ENCODE measurements at regions of chr5 and their contacts with region 1.

Region 1: DNA sequence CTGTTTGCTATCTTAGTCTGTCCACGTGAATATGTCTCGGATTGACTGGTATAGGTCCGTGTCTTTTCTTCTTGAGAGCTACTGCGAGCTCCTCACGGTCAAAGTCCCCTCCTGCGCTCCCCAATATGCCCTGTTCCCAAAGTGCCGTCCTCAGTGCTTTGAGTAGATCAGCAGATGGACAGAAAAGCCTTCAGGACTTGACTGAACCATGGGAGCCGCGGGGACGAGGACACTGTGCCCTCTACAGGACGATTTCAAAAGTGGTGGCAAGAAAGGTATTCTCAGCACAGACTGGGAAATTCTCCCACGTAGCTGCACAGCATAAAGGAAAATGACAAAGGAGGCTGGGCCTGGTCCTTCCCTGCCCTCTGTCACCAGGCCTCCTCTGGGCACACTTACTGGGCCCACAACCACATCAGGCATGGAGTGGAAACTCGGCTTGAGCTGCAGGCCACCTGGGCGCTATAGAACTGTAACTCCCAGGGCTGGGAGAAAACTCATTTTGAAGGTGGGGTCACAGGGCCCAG is 16.6 kb upstream of the MTMR12 start:
- DNase-seq: peak in 4 of 5 donors; percentile 37 to 50 (median 48)
- H3K4me3 ChIP-seq: no peak overlapping the region
- H3K27ac ChIP-seq: no peak overlapping the region
- H3K4me1 ChIP-seq: peaks cover 3 to 13% (median 4%) of the 10 kb centered on the region in 3 donors
- H3K27me3 ChIP-seq: no peaks in the 10 kb centered on the region
- CTCF ChIP-seq: peak; percentile 69

Region 2: GRCh38 chr5:32109236-32109635 is 220.1 kb before region 1 on chr5:
- intact Hi-C with region 1: no loop called
- DNase-seq: no peak
- H3K4me3 ChIP-seq: no peak overlapping the region
- H3K27ac ChIP-seq: no peak overlapping the region
- H3K4me1 ChIP-seq: no peaks in the 10 kb centered on the region
- H3K27me3 ChIP-seq: no peaks in the 10 kb centered on the region
- CTCF ChIP-seq: no peak

Region 3: DNA sequence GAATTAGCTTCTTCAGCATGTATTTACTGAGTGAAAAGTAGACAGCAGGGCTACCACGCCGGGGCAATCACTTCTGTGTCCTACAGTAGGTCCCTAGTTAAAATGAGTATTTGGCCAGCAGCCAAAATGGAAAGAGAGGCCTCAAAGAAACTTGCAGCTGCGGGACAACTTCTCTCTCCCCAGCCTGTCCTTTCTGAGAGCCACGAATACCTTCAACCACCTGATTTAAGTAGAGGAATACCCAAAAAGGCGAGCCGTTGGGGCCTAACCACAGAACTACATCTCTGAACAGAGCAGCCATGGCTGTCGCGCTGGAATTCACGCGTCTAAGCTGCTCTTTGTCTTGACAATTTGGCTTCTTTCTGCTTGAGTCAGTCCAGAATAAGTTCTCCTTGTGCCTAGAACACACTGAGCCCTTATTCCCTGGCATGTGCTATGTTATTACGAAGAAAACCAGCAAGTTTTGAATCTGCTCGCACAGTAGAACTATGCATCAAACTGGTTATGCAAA is 111.4 kb before region 1 on chr5:
- intact Hi-C with region 1: no loop called
- DNase-seq: peak in 2 of 5 donors; percentile 37 to 66
- H3K4me3 ChIP-seq: no peak overlapping the region
- H3K27ac ChIP-seq: no peak overlapping the region
- H3K4me1 ChIP-seq: no peaks in the 10 kb centered on the region
- H3K27me3 ChIP-seq: no peaks in the 10 kb centered on the region
- CTCF ChIP-seq: no peak

Region 4: GRCh38 chr5:32232441-32233219 is 96.7 kb before region 1 on chr5:
- intact Hi-C with region 1: loop called (anchors 10 kb)
- DNase-seq: peak in 4 of 5 donors; percentile 61 to 82 (median 74)
- H3K4me3 ChIP-seq: no peak overlapping the region
- H3K27ac ChIP-seq: peak overlapping the region; percentile 18 to 88
- H3K4me1 ChIP-seq: peaks cover 0 to 22% (median 22%) of the 10 kb centered on the region in 3 donors
- H3K27me3 ChIP-seq: no peaks in the 10 kb centered on the region
- CTCF ChIP-seq: peak; percentile 93

Measured in kidney (tissue), 22 donors.